ENCODE measurements at regions of chr11 and their contacts with region 1.

Region 1: GRCh38 chr11:14249121-14249963 is 109.6 kb downstream of the RRAS2 start:
- DNase-seq: peak; percentile 69
- ATAC-seq: peak; percentile 51
- H3K4me3 Mint-ChIP-seq: no peak overlapping the region
- H3K27ac Mint-ChIP-seq: no peak overlapping the region; the same call in 1 of the 2 replicates
- H3K4me1 Mint-ChIP-seq: peaks cover 28% of the 10 kb centered on the region
- H3K27me3 Mint-ChIP-seq: peaks cover 4% of the 10 kb centered on the region
- CTCF ChIP-seq: peak; percentile 94

Region 2: DNA sequence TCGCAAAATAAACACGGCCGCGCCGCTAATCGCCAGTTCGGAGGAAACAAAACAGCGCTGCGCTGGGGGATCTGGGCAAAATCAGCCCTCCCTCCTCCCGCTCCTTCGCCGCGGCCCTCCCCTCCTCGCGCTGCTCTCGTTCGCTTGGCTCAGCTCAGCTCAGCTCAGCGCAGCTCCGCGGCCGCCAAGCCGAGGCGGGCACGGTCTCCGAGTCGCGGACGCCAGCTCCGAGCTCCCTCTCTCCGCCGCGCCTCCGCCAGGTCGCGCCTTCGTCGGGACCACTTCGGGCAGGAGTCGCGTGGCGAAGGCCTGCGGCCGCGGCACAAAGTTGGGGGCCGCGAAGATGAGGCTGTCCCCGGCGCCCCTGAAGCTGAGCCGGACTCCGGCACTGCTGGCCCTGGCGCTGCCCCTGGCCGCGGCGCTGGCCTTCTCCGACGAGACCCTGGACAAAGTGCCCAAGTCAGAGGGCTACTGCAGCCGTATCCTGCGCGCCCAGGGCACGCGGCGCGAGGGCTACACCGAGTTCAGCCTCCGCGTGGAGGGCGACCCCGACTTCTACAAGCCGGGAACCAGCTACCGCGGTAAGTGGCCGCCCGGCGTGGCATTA is 286.7 kb before region 1 on chr11 and contains the start of gene SPON1:
- CTCF ChIA-PET with region 1: interaction called, 10 read pairs
- POLR2A ChIA-PET with region 1: no interaction called
- DNase-seq: peak; percentile 73
- ATAC-seq: peak; percentile 73
- H3K4me3 Mint-ChIP-seq: peak within 1 kb of the TSS; percentile 83
- H3K27ac Mint-ChIP-seq: no peak within 1 kb of the TSS
- H3K4me1 Mint-ChIP-seq: peaks cover 40% of the 10 kb centered on the region
- H3K27me3 Mint-ChIP-seq: peaks cover 85% of the 10 kb centered on the region
- CTCF ChIP-seq: no peak
- total RNA-seq, gene SPON1: 4.1 to 6.4 TPM (median 4.1 TPM) in 3 replicates

Region 3: GRCh38 chr11:14261066-14261465 is 11.7 kb after region 1 on chr11:
- CTCF ChIA-PET with region 1: no interaction called
- POLR2A ChIA-PET with region 1: no interaction called
- DNase-seq: no peak
- ATAC-seq: no peak
- H3K4me3 Mint-ChIP-seq: no peak overlapping the region
- H3K27ac Mint-ChIP-seq: no peak overlapping the region
- H3K4me1 Mint-ChIP-seq: no peaks in the 10 kb centered on the region
- H3K27me3 Mint-ChIP-seq: peaks cover 16% of the 10 kb centered on the region
- CTCF ChIP-seq: no peak

Measured in WTC11 (cell line).